ENCODE measurements at regions of chr1 and their contacts with region 1.

Region 1: DNA sequence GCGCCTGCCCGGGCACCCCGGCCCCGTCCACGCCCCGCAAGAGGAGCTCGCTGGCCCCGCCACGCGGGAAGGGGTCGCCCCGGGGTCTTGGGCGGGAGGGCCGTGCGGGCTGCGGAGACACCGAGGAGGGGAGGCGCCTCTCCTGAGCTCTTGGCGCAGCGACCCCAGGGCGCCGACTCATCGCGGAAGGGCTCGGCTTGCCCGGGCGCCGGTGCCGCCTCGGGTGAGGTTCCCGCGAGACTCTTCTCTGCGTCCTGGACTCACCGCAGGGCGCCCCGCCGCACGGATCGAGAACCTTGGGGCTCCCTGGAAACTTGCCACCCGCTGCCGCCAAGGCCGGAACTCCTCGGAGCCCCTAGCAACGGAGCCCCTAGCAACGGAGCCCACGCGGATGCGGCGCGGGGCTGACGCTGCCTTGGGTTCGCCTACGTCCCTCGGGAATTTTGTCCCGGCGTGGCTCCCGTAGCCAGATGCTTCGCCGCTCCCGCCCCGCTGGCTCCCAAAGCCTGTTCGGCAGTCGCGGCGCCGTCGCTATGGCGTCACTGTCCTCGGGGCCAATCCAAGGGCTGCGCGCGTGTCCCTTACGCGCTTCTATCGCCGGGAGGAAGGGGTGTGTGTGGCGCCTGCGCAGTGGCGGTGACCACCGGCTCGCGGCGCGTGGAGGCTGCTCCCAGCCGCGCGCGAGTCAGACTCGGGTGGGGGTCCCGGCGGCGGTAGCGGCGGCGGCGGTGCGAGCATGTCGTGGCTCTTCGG is at the start of gene ATAD3A:
- DNase-seq: peak; percentile 83 to 98 (median 95)
- ATAC-seq: peak; percentile 94
- H3K4me3 ChIP-seq: peak within 1 kb of the TSS; percentile 81 to 99
- H3K4me3 Mint-ChIP-seq: peak within 1 kb of the TSS; percentile 88
- H3K27ac ChIP-seq: peak within 1 kb of the TSS; percentile 90 to 97
- H3K27ac Mint-ChIP-seq: peak within 1 kb of the TSS; percentile 94
- H3K4me1 ChIP-seq: peaks cover 6% of the 10 kb centered on the region
- H3K4me1 Mint-ChIP-seq: peaks cover 11% of the 10 kb centered on the region
- H3K27me3 ChIP-seq: no peaks in the 10 kb centered on the region
- H3K27me3 Mint-ChIP-seq: no peaks in the 10 kb centered on the region
- CTCF ChIP-seq: no peak
- total RNA-seq, gene ATAD3A: 27.0 to 29.6 TPM

Region 2: DNA sequence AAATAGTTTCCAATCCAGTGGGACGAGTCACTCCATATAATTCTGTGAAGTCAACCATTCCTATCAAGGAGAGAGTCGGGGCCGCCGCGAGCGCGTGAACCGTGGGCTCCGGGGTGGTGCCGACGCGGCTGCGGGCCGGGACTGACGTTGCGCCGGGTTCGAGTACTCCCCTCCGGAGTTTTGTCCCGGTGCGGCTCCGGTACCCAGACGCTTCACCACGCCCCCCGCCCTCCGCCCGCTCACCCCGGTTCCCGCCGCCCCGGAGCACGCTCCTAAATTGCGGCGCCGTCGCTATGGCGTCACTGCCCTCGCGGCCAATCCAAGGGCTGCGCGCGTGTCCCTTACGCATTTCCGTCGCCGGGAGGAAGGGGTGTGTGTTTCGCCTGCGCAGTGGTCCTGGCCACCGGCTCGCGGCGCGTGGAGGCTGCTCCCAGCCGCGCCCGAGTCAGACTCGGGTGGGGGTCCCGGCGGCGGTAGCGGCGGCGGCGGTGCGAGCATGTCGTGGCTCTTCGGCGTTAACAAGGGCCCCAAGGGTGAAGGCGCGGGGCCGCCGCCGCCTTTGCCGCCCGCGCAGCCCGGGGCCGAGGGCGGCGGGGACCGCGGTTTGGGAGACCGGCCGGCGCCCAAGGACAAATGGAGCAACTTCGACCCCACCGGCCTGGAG is 40.2 kb before region 1 on chr1 and contains the start of gene ATAD3B:
- CTCF ChIA-PET with region 1: no interaction called
- POLR2A ChIA-PET with region 1: no interaction called
- intact Hi-C with region 1: loop called (anchors 1 to 2 kb)
- DNase-seq: peak; percentile 75 to 95 (median 90)
- ATAC-seq: peak; percentile 93
- H3K4me3 ChIP-seq: peak within 1 kb of the TSS; percentile 62 to 86
- H3K4me3 Mint-ChIP-seq: peak within 1 kb of the TSS; percentile 92
- H3K27ac ChIP-seq: peak within 1 kb of the TSS; percentile 81 to 89
- H3K27ac Mint-ChIP-seq: peak within 1 kb of the TSS; percentile 94
- H3K4me1 ChIP-seq: peaks cover 24% of the 10 kb centered on the region
- H3K4me1 Mint-ChIP-seq: peaks cover 24% of the 10 kb centered on the region
- H3K27me3 ChIP-seq: no peaks in the 10 kb centered on the region
- H3K27me3 Mint-ChIP-seq: no peaks in the 10 kb centered on the region
- CTCF ChIP-seq: no peak
- total RNA-seq, gene ATAD3B: 55.4 to 69.6 TPM